Activated CD8-positive, alpha-beta memory T cell treated with anti-CD3 and anti-CD28 coated beads, Interleukin-2, amount 10 ng/mL, durations not matched to agents 7 days and 5 days (primary cell): ENCODE measurements at regions of chr1 and their contacts with region 1.

Region 1: DNA sequence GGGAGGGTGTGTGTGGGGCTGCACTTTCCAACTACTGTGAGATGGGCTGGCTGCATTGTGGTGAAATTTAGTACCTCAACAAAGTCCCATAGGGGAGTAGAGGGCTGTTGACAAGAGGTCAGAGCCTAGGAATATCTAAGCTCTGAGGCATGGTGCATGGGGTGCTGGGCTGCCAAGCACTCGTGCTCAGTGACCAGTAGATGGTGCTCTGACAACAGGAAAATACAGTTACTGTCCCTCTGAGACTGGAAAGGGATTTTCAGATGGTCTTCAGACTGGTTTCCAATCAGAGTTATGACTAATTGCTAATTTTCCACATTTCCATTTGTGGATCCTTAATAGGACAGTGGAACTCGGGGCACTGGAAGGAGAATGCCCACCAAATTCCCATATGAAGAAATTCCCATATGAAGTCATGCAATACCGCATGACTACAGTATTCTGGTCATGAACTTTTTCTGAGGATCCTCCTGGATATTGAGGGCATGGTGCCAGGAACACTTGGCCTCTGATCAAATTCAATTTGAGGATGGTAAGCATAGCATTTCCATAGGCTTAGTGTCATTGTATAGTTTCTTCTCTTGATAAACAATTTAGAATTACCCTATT is 4.1 kb upstream of the CACNA1E start:
- DNase-seq: peak; percentile 47
- ATAC-seq: peak; percentile 55
- H3K4me3 Mint-ChIP-seq: no peak overlapping the region
- H3K27ac Mint-ChIP-seq: no peak overlapping the region
- H3K4me1 Mint-ChIP-seq: peaks cover 3% of the 10 kb centered on the region
- H3K27me3 Mint-ChIP-seq: peaks cover 51% of the 10 kb centered on the region

Region 2: GRCh38 chr1:181936768-181937581 is 457.7 kb after region 1 on chr1:
- CTCF ChIA-PET with region 1: interaction called, 15 read pairs
- DNase-seq: peak; percentile 65
- ATAC-seq: peak; percentile 83
- H3K4me3 Mint-ChIP-seq: no peak overlapping the region
- H3K27ac Mint-ChIP-seq: no peak overlapping the region
- H3K4me1 Mint-ChIP-seq: peaks cover 4% of the 10 kb centered on the region
- H3K27me3 Mint-ChIP-seq: peaks cover 9% of the 10 kb centered on the region